Posterior vena cava (tissue), 2 donors: ENCODE measurements at regions of chr22 and their contacts with region 1.

Region 1: GRCh38 chr22:28736296-28737155 is 5.1 kb downstream of the CHEK2 start:
- DNase-seq: no peak

Region 2: GRCh38 chr22:28669388-28669787 is 67.1 kb before region 1 on chr22:
- intact Hi-C with region 1: loop called in 1 of 2 experiments (anchors 5 kb)
- DNase-seq: no peak

Region 3: GRCh38 chr22:29163808-29164207 is 427.3 kb after region 1 on chr22:
- intact Hi-C with region 1: loop called in 1 of 2 experiments (anchors 2 kb)
- DNase-seq: peak; percentile 65